ENCODE measurements at regions of chr10 and their contacts with region 1.

Region 1: DNA sequence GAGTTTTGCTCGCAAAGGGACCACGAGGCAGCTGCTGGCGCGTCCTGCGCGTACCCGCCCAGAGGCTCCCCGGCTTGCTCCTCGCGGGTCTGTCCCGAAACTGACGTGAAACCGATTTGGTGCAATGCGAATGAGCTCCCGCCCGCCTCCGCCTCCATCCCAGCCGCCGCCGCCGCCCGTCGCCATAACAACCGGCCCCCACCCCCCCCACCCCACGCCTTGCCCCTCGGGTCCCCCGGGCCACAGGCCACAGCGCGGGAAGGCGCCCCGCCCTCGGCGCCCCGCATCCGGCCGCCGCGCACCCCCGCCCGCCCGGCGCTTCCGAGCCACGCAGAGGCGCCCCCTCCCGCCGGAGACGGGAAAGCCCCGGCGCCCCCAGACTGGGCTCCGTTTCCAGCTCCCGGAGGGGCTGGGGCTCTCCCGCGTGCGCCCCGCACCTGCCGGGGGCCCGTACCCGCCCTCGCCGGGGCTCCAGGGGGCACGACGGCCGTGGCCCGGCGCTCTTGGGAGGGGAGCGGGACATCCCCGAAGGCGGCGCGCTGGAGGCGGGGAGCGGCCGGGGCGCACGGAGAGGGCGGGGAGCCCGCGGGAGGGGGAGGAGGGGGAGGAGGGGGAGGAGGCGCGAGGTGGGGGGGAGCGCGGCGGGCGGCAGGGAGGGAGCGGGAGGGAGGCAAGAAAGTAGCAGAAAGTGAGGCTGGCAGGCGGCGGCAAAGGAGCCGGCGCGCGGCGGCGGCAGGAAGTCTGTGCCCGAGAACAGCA is at the start of gene CAMK1D:
- DNase-seq: peak; percentile 95
- H3K4me3 Mint-ChIP-seq: peak within 1 kb of the TSS; percentile 90
- H3K27ac Mint-ChIP-seq: peak within 1 kb of the TSS; percentile 97
- H3K4me1 Mint-ChIP-seq: peaks cover 34% of the 10 kb centered on the region
- H3K27me3 Mint-ChIP-seq: peaks cover 53% of the 10 kb centered on the region
- total RNA-seq, gene CAMK1D: 5.6 and 6.6 TPM in 2 replicates

Region 2: GRCh38 chr10:12221323-12222298 is 127.4 kb before region 1 on chr10:
- intact Hi-C with region 1: no loop called
- DNase-seq: no peak
- H3K4me3 Mint-ChIP-seq: no peak overlapping the region
- H3K27ac Mint-ChIP-seq: peak overlapping the region; percentile 2
- H3K4me1 Mint-ChIP-seq: peaks cover 5% of the 10 kb centered on the region
- H3K27me3 Mint-ChIP-seq: no peaks in the 10 kb centered on the region

Region 3: GRCh38 chr10:12333380-12334185 is 15.5 kb before region 1 on chr10:
- intact Hi-C with region 1: no loop called
- DNase-seq: no peak
- H3K4me3 Mint-ChIP-seq: no peak overlapping the region
- H3K27ac Mint-ChIP-seq: no peak overlapping the region
- H3K4me1 Mint-ChIP-seq: peaks cover 6% of the 10 kb centered on the region
- H3K27me3 Mint-ChIP-seq: peaks cover 13% of the 10 kb centered on the region

Region 4: DNA sequence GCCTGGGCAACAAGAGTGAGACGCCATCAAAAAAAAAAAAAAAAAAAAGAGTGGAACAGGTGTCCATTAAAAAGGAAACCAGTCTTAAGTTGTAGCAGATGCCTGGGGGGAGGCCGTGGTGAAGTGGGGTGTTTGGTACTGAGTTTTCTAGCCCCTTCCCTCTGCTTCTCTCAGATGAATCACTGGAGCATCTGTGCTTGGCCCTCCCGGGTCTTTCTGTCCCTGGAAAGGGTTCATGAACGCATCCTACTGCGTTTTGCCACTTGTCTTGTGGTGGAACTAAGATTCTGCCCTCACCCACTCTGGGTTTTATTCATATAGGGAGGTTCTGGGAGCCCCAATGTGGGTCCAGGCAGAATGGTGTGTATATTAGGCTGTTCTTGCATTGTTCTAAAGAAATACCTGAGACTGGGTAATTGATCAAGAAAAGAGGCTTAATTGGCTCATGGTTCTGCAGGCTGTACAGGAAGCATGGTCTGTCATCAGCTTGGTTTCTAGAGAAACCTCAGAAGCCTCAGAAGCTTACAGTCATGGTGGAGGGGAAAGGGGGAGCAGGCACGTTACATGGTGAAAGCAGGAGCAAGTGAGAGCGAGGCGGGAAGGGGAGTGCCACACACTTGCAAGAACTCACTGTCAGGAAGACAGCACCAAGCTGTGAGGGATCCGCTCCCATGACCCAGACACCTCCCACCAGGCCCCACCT is 63.8 kb after region 1 on chr10:
- intact Hi-C with region 1: loop called (anchors 5 kb)
- DNase-seq: peak; percentile 84
- H3K4me3 Mint-ChIP-seq: peak overlapping the region; percentile 5
- H3K27ac Mint-ChIP-seq: peak overlapping the region; percentile 7
- H3K4me1 Mint-ChIP-seq: peaks cover 19% of the 10 kb centered on the region
- H3K27me3 Mint-ChIP-seq: peaks cover 5% of the 10 kb centered on the region

Region 5: DNA sequence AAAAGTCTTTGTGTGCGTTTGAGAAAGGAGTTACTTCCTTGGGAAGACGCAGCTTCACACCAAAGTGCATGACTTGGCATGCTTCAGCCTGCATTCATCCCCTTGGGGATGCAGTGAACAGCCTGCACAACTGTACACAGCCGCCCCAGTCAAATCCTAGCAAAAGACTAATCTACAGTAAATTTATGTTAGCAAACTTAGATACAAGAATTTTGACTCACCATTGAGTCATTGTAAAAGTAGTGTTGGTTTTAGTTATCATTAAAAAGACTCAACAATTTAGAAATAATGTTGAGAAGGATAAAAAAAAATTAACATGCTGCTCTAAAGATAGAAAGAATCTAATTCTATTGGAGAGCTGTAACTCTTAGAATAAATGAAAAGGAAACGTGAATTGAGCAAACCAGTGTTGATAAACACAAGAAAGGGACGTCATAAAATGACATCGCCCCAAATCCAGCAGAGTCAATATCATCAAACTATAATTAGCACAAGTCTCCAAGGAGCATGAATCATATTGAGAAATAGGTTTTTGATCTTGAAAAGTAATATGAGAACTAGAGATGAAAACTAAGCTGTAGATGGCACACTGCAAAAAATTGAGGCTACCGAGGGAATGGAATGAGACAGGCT is 739.1 kb after region 1 on chr10:
- intact Hi-C with region 1: no loop called
- DNase-seq: no peak
- H3K4me3 Mint-ChIP-seq: no peak overlapping the region
- H3K27ac Mint-ChIP-seq: no peak overlapping the region
- H3K4me1 Mint-ChIP-seq: no peaks in the 10 kb centered on the region
- H3K27me3 Mint-ChIP-seq: peaks cover 8% of the 10 kb centered on the region